ENCODE measurements at regions of chr6 and their contacts with region 1.

Region 1: GRCh38 chr6:105601541-105602236 is 198.8 kb upstream of the PREP start:
- DNase-seq: peak; percentile 41
- H3K4me3 Mint-ChIP-seq: peak overlapping the region; percentile 64
- H3K27ac Mint-ChIP-seq: peak overlapping the region; percentile 89
- H3K4me1 Mint-ChIP-seq: peaks cover 37% of the 10 kb centered on the region
- H3K27me3 Mint-ChIP-seq: peaks cover 2% of the 10 kb centered on the region

Region 2: DNA sequence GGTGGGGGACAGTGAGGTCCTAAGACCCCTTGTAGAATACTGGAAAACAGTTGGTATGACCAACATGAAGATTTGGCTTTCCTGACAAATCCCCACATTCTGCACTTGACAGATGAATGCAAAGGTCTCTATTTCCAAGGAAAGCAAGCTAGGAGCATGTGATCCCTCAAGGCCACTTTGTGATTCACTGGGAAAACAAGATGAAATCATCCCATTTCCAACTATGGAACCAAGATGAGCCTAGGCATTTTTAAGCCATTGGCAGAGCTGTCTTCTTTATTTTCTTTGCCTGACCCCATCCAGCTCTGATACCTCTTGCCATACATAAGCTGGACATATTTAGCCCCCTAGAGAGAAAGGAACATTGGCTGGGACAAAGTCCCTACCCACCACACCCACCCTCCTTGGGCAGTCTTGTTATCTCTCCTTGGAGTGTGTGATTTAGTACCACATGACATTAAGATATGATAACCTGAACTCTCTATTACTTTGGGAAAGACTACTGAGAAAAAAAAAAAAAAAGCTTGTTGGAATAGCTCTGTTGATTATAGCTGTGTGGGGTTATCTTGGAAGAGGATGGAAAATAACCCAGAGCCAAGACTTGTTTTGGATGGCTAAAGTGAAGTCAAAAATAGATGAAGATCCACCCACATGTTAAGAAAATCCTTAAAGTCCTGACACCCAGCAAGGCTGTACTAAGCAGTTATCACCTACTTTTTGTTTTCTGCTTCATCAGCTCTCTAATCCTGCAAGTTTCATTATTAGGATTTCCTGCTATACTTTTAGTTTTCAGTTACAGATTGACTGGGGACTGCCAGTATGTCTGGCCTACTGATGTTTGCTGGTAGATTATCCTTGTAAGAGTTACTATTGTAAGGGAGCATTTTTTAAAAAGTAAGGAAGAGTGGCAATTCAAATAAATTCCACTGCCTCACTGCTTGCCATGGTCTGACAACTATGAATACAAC is 108.7 kb before region 1 on chr6:
- intact Hi-C with region 1: loop called (anchors 2 kb)
- DNase-seq: no peak
- H3K4me3 Mint-ChIP-seq: peak overlapping the region; percentile 21
- H3K27ac Mint-ChIP-seq: peak overlapping the region; percentile 78
- H3K4me1 Mint-ChIP-seq: peaks cover 26% of the 10 kb centered on the region
- H3K27me3 Mint-ChIP-seq: no peaks in the 10 kb centered on the region

Region 3: DNA sequence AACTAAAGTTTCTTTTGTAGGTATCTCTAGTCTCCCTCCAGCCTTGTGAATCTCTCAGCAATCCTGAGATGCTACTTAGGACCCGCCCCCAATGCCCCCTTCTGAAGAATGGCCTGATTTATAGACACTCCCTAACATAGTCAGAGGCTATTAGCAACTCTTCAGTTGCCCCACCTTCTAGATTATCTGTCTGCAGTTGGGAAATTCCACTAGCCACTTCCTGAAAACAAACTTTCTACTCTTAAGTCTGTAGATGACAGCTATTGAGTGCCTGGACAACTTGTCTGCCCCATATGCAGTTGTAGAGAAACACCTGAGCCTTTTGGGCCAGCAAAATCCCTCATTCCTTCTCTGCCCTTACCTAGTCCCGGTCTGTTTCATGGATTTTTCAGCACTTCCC is 10.6 kb before region 1 on chr6:
- intact Hi-C with region 1: loop called (anchors 1 kb)
- DNase-seq: peak; percentile 27
- H3K4me3 Mint-ChIP-seq: peak overlapping the region; percentile 45
- H3K27ac Mint-ChIP-seq: peak overlapping the region; percentile 57
- H3K4me1 Mint-ChIP-seq: peaks cover 82% of the 10 kb centered on the region
- H3K27me3 Mint-ChIP-seq: no peaks in the 10 kb centered on the region

Region 4: DNA sequence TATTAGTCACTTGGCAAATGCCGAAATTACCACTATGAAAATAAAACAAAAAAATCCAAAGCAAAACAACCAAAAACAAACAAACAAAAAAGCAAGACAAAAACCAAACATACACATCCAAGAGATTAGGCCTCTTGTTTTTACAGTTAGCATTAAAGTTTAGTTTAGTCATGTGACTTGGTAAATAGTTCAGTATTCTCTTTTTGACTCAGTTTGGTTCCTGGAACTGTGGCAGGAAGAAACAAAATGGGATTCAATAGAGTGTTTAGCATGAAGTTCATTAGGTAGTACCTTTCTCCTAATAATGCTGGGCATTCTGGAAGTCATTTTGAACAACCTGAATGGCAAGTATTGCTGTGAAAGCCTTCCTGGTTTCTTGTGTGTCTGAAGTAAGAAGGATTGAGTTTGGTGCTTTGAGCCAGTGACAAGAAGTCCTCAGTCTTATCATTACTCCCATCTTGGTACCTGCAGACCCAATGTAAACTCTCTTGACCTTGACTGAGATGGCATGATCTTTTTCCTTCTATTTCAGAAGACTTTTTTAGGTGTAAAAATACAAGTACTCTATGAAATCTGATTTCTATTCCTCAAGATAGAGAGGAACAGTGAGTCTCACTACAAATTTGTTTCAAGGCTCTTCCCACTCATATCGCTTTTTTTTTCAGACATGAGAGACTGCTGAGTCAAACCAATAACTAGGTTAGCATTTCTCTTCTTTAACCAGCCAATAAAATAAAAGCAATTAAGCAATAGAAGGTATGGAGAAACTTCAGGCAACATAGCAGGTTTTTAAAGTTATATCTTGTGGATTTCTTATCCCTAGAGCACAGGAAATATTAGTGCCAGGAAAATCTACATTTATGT is 24.8 kb after region 1 on chr6:
- intact Hi-C with region 1: loop called (anchors 1 kb)
- DNase-seq: no peak
- H3K4me3 Mint-ChIP-seq: peak overlapping the region; percentile 32
- H3K27ac Mint-ChIP-seq: peak overlapping the region; percentile 89
- H3K4me1 Mint-ChIP-seq: peaks cover 59% of the 10 kb centered on the region
- H3K27me3 Mint-ChIP-seq: peaks cover 3% of the 10 kb centered on the region

Region 5: GRCh38 chr6:105669232-105669631 is 67.5 kb after region 1 on chr6:
- intact Hi-C with region 1: no loop called
- DNase-seq: no peak
- H3K4me3 Mint-ChIP-seq: no peak overlapping the region
- H3K27ac Mint-ChIP-seq: no peak overlapping the region
- H3K4me1 Mint-ChIP-seq: peaks cover 14% of the 10 kb centered on the region
- H3K27me3 Mint-ChIP-seq: peaks cover 16% of the 10 kb centered on the region

Region 6: GRCh38 chr6:105692626-105693215 is 91.0 kb after region 1 on chr6:
- intact Hi-C with region 1: no loop called
- DNase-seq: no peak
- H3K4me3 Mint-ChIP-seq: no peak overlapping the region
- H3K27ac Mint-ChIP-seq: no peak overlapping the region
- H3K4me1 Mint-ChIP-seq: peaks cover 22% of the 10 kb centered on the region
- H3K27me3 Mint-ChIP-seq: peaks cover 12% of the 10 kb centered on the region

Region 7: DNA sequence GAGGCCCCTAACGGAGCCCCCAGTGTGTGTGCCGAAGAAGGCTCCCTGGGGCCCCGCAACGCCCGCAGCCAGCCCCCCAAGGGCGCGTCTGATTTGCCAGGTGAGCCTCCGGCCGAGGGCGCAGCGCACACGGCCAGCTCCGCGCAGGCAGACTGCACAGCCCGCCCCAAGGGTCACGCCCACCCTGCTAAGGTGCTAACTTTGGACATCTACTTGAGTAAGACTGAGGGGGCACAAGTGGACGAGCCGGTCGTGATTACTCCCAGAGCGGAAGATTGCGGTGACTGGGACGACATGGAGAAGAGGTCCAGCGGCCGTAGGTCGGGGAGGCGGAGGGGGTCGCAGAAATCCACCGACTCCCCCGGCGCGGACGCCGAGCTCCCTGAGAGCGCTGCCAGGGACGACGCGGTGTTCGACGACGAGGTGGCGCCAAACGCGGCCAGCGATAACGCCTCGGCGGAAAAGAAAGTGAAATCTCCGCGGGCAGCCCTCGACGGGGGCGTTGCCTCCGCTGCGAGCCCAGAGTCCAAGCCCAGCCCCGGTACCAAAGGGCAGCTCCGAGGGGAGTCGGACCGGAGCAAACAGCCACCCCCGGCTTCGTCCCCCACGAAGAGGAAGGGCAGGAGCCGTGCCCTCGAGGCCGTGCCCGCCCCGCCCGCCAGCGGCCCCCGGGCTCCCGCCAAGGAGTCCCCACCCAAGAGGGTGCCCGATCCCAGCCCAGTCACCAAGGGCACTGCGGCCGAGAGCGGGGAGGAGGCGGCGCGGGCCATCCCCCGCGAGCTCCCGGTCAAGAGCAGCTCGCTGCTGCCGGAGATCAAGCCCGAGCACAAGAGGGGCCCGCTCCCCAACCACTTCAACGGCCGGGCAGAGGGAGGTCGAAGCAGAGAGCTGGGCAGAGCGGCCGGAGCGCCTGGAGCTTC is 910.6 kb after region 1 on chr6:
- intact Hi-C with region 1: loop called (anchors 5 kb)
- DNase-seq: peak; percentile 81
- H3K4me3 Mint-ChIP-seq: peak overlapping the region; percentile 91
- H3K27ac Mint-ChIP-seq: peak overlapping the region; percentile 93
- H3K4me1 Mint-ChIP-seq: peaks cover 58% of the 10 kb centered on the region
- H3K27me3 Mint-ChIP-seq: peaks cover 21% of the 10 kb centered on the region